ENCODE measurements at regions of chr19 and their contacts with region 1.

Region 1: GRCh38 chr19:42254989-42255765 is at the start of gene ERF:
- DNase-seq: peak; percentile 91
- H3K4me3 ChIP-seq: peak within 1 kb of the TSS; percentile 95 to 99 (median 98)
- H3K27ac ChIP-seq: peak within 1 kb of the TSS; percentile 91
- H3K4me1 ChIP-seq: peaks cover 32% of the 10 kb centered on the region
- H3K27me3 ChIP-seq: no peaks in the 10 kb centered on the region
- CTCF ChIP-seq: no peak
- total RNA-seq, gene ERF: 101 to 139 TPM

Region 2: DNA sequence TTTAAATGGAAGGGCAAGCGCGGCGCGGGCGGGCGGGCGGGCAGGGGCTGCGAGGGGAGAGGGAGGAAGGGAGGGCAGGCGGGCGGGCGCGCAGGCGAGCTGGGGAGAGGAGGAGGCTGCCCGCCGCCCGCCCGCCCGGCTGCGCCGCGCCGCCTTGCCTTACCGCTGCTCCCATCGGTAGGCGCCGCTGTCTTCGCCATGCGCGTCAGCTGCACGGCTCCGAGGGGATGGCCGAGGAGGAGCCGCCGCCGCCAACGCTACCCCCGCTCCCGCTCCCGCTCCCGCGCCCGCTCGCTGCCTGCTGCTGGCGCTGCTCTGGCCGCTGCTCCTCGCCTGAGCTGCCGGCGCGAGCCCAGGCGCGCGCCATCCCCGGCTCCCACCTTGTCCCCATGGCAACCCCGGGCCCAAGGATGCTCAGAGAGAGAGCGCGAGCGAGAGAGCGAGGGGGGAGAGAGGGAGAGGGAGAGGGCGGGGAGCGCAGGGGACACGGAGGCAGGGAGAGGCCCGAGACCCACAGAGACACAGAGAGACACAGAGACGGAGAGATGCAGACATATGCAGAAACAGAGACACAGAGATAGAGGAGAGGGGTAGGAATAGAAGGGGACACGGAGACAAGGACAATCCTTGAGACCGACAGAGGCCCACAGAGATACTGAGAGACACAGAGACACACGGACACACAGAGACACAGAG is 78.0 kb before region 1 on chr19:
- CTCF ChIA-PET with region 1: no interaction called
- dilution Hi-C with region 1: no loop called
- in situ Hi-C with region 1: no loop called
- intact Hi-C with region 1: no loop called
- DNase-seq: peak; percentile 76
- H3K4me3 ChIP-seq: peak overlapping the region in 2 of 3 experiments; percentile 13 to 50
- H3K27ac ChIP-seq: no peak overlapping the region
- H3K4me1 ChIP-seq: peaks cover 11% of the 10 kb centered on the region
- H3K27me3 ChIP-seq: peaks cover 20% of the 10 kb centered on the region
- CTCF ChIP-seq: peak; percentile 16 to 45

Region 3: GRCh38 chr19:42268704-42269477 is 13.7 kb after region 1 on chr19 and contains the start of gene CIC:
- CTCF ChIA-PET with region 1: no interaction called
- dilution Hi-C with region 1: no loop called
- in situ Hi-C with region 1: no loop called
- intact Hi-C with region 1: loop called (anchors 1 kb)
- DNase-seq: peak; percentile 100
- H3K4me3 ChIP-seq: peak within 1 kb of the TSS; percentile 71 to 78 (median 73)
- H3K27ac ChIP-seq: peak within 1 kb of the TSS; percentile 98
- H3K4me1 ChIP-seq: peaks cover 33% of the 10 kb centered on the region
- H3K27me3 ChIP-seq: no peaks in the 10 kb centered on the region
- CTCF ChIP-seq: no peak
- total RNA-seq, gene CIC: 37.0 to 91.0 TPM

Region 4: GRCh38 chr19:42277821-42278451 is 22.8 kb after region 1 on chr19:
- CTCF ChIA-PET with region 1: no interaction called
- dilution Hi-C with region 1: no loop called
- in situ Hi-C with region 1: no loop called
- intact Hi-C with region 1: loop called (anchors 1 kb)
- DNase-seq: peak; percentile 69
- H3K4me3 ChIP-seq: peak overlapping the region; percentile 4 to 29 (median 9)
- H3K27ac ChIP-seq: peak overlapping the region; percentile 51
- H3K4me1 ChIP-seq: peaks cover 72% of the 10 kb centered on the region
- H3K27me3 ChIP-seq: no peaks in the 10 kb centered on the region
- CTCF ChIP-seq: peak in 1 of 2 donors; percentile 13